ENCODE measurements at regions of chr12 and their contacts with region 1.

Region 1: GRCh38 chr12:2439332-2440100 is 355.3 kb upstream of the FKBP4 start:
- DNase-seq: no peak
- H3K4me3 ChIP-seq: no peak overlapping the region
- CTCF ChIP-seq: no peak

Region 2: GRCh38 chr12:1644534-1645438 is 794.7 kb before region 1 on chr12:
- in situ Hi-C with region 1: no loop called
- DNase-seq: peak; percentile 72
- H3K4me3 ChIP-seq: no peak overlapping the region
- CTCF ChIP-seq: no peak

Region 3: DNA sequence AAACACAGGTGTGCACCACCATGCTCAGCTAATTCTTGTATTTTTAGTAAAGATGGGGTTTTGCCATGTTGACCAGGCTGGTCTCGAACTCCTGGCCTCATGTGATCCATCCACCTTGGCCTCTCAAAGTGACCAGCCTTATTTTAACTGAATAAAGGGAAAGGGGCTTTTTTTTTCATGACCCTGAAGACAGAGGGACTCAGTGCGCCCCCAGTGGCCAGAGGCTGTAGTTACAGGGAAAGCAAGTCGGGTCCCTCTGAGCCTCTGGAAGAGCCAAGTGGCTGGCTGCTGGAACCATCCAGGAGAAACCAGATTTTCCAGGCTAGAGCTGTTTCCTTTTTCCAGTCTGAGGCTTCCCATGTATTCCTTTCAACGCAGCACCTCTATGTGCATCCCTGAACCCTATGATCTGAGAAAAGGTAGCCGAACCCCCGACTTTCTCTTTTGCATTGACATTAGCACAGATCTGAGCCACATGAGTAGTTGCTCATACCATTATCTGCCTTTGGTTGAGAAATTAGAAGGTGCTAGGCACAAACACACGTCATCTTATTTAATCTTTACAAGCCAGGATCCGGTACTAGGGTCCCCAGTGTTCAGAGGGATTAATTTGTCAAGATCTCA is 44.0 kb before region 1 on chr12:
- in situ Hi-C with region 1: loop called (anchors 5 kb)
- DNase-seq: no peak
- H3K4me3 ChIP-seq: no peak overlapping the region
- CTCF ChIP-seq: peak; percentile 85

Measured in astrocyte of the cerebellum (primary cell).